Activated naive CD4-positive, alpha-beta T cell treated with anti-CD3 and anti-CD28 coated beads for 36 hours (primary cell): ENCODE measurements at regions of chr11 and their contacts with region 1.

Region 1: DNA sequence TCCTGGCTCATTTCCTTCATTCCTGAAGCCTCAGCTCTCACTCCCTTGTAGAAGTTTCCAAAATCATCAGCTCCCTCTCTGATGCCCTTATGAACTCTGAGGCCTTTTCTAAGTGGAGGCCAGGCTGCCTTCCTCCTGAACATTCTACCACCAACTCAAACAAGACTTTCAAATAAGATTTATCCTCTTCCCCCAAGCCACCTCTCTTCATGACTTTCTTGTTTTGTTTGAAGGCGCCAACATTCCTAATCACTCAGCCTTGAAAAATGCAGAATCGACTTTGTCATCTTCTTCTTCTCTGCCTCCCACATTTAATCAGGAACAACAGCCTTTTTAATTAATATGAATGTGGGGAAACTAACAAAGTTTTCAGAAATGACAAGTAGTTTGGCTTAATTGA is 927.9 kb downstream of the OPCML start:
- DNase-seq: no peak
- H3K4me3 Mint-ChIP-seq: no peak overlapping the region
- H3K27ac Mint-ChIP-seq: no peak overlapping the region
- H3K4me1 Mint-ChIP-seq: no peaks in the 10 kb centered on the region
- H3K27me3 Mint-ChIP-seq: no peaks in the 10 kb centered on the region

Region 2: GRCh38 chr11:132024587-132025295 is 579.7 kb before region 1 on chr11:
- CTCF ChIA-PET with region 1: no interaction called
- intact Hi-C with region 1: loop called (anchors 5 kb)
- DNase-seq: no peak
- H3K4me3 Mint-ChIP-seq: no peak overlapping the region
- H3K27ac Mint-ChIP-seq: no peak overlapping the region
- H3K4me1 Mint-ChIP-seq: no peaks in the 10 kb centered on the region
- H3K27me3 Mint-ChIP-seq: no peaks in the 10 kb centered on the region